ENCODE measurements at regions of chr3 and their contacts with region 1.

Region 1: DNA sequence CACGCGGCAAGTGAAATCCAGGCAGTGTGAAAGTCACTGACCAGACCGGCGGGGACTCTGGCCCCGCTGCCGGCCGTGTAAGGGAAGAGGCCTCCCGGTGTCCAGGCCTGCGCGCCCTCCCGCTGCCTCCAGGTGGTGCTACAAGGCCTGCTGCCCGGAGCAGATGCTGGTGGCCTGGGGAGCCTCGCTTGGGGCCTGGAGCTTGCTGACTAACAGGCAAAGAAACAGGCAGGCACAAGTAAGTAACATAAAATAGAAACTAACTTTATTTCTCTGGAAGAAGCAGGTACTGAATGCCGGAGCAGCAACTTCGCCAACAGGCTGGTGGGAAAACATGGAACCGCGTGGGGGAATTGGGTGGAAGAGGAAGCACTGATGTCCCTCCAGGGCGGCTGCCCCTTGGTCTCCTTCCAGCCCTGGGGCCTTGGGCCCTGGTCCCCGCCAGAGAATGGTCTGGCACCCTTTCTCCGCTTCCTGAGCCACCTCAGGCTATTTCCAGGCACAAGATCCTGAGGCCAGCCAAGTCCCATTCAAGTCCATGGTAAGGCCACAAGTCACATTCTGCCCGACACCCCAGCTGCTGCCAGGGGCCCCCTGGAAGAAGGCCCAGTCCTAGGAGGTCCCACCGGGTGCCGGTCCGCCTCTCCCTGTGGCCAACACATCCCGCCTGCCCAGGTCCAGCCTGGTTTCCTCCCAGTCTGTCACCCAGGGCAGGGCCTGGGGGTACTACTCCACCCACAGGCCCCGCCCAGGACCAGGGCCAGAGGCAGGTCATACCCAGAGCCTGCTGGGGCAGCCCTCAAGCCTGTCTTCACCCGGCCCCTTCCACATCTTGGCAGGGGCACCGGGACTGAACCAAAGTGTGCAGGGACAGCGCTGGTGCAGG is 45.0 kb downstream of the TNK2 start:
- DNase-seq: peak; percentile 94

Region 2: DNA sequence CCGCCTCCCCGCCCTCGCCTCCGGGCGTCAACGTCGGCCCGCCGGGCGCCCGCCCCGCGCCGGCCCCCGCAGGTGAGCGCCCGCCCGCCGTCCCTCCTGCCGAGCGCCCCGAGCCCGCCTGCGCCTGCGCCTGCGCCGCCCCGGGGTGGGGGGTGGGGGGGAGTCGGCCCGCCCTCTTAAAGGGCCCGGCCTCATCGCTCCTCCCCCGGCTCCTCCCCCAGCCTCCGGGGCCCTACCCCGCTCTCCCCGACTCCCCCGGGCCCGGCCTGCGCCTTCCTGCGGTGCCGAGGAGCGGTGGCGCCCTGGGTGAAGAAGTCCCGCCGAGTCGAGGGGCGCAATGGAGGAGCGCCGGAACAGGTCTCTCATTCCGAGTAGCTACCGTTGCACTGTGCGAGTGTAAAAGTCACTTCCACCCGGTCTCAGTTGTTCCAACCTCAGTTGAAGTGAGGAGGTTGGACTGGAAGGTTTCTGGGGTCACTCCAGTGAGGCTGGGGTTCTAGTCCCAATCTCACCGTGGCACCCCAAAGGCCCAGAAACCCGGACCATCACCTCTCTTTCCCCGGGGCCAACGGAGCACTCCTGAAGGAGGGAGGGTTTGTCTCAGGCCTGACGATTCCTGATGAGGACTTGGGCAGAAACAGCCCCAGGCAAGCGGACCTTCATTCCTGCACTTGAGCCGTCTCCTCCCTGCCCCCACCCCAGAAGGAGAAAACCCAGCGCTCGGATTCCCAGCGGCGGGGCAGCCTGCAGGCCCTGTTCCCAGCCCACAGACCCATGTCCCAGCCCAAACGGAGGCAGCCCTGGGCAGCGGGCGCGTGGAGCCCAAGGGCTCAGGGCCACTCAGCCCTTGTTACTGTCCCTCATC is 46.5 kb after region 1 on chr3:
- intact Hi-C with region 1: loop called (anchors 1 kb)
- DNase-seq: peak; percentile 94

Measured in cardiac septum (tissue), 1 donor.